Activated CD4-positive, alpha-beta memory T cell treated with anti-CD3 and anti-CD28 coated beads for 36 hours (primary cell): ENCODE measurements at regions of chr6 and their contacts with region 1.

Region 1: GRCh38 chr6:122869437-122870024 is 80.5 kb downstream of the SMPDL3A start:
- DNase-seq: peak; percentile 12
- H3K4me3 Mint-ChIP-seq: no peak overlapping the region
- H3K27ac Mint-ChIP-seq: no peak overlapping the region
- H3K4me1 Mint-ChIP-seq: no peaks in the 10 kb centered on the region
- H3K27me3 Mint-ChIP-seq: peaks cover 2% of the 10 kb centered on the region

Region 2: GRCh38 chr6:122717350-122717749 is 152.2 kb before region 1 on chr6:
- CTCF ChIA-PET with region 1: no interaction called
- POLR2A ChIA-PET with region 1: no interaction called
- intact Hi-C with region 1: no loop called
- DNase-seq: no peak
- H3K4me3 Mint-ChIP-seq: no peak overlapping the region
- H3K27ac Mint-ChIP-seq: no peak overlapping the region
- H3K4me1 Mint-ChIP-seq: no peaks in the 10 kb centered on the region
- H3K27me3 Mint-ChIP-seq: no peaks in the 10 kb centered on the region

Region 3: GRCh38 chr6:123064038-123064437 is 194.5 kb after region 1 on chr6:
- CTCF ChIA-PET with region 1: no interaction called
- POLR2A ChIA-PET with region 1: no interaction called
- intact Hi-C with region 1: no loop called
- DNase-seq: no peak
- H3K4me3 Mint-ChIP-seq: no peak overlapping the region
- H3K27ac Mint-ChIP-seq: no peak overlapping the region
- H3K4me1 Mint-ChIP-seq: no peaks in the 10 kb centered on the region
- H3K27me3 Mint-ChIP-seq: no peaks in the 10 kb centered on the region

Region 4: DNA sequence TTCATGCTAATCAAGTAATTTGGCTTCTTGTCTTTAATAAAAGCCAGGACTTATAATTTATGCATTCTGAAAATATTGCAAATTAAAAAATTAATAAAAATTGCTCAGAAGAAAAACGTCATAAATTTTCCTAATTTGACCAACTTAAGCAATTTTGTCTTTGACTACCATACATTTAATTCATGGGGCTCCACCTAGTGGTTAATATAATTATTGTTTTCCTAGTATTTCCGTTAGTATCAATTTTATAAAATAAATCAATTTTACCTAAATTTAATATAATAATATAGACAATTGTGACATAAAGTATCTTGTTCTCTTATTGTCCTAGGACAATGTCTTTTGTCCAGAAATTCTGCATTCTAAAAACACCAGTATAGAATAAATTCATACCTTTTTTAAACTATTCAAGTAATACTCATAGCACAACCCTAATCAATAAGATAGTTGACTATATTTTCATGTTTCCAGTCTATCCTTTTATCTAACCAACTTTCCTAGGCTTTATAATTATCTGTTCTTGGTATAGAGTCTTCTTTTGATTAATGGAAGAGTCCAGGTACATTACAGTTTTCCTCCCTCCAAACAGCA is 447.3 kb after region 1 on chr6:
- CTCF ChIA-PET with region 1: interaction called, 5 read pairs
- POLR2A ChIA-PET with region 1: no interaction called
- intact Hi-C with region 1: loop called (anchors 2 kb)
- DNase-seq: no peak
- H3K4me3 Mint-ChIP-seq: no peak overlapping the region
- H3K27ac Mint-ChIP-seq: no peak overlapping the region
- H3K4me1 Mint-ChIP-seq: no peaks in the 10 kb centered on the region
- H3K27me3 Mint-ChIP-seq: no peaks in the 10 kb centered on the region